MCF 10A (cell line): ENCODE measurements at regions of chr5 and their contacts with region 1.

Region 1: GRCh38 chr5:96868603-96869371 is 7.5 kb upstream of the ERAP2 start:
- DNase-seq: peak; percentile 69
- H3K4me3 Mint-ChIP-seq: no peak overlapping the region
- H3K27ac Mint-ChIP-seq: no peak overlapping the region
- H3K4me1 Mint-ChIP-seq: peaks cover 6% of the 10 kb centered on the region
- H3K27me3 Mint-ChIP-seq: no peaks in the 10 kb centered on the region
- CTCF ChIP-seq: peak; percentile 95

Region 2: DNA sequence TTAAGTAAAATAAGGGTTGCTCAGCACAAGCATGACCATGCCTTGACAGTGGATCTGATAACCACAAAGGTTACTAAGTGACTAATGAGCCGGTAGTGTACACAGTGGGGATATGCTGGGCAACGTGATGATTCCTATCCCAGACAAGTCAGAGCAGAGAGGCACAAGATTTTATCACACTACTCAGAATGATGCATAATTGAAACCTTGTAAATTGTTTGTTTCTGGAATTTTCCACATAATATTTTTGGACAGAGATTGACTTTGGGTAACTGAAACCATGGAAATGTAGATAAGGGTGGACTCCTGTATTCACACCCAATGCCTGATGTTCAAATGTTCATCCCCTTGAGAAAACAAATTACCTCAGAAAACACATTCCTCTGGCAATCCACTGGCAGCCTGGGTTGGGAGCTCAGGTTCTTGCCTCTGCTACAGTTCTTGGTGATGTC is 44.9 kb before region 1 on chr5:
- CTCF ChIA-PET with region 1: interaction called, 12 read pairs
- POLR2A ChIA-PET with region 1: no interaction called
- intact Hi-C with region 1: no loop called
- DNase-seq: peak; percentile 64
- H3K4me3 Mint-ChIP-seq: no peak overlapping the region
- H3K27ac Mint-ChIP-seq: no peak overlapping the region
- H3K4me1 Mint-ChIP-seq: peaks cover 5% of the 10 kb centered on the region
- H3K27me3 Mint-ChIP-seq: no peaks in the 10 kb centered on the region
- CTCF ChIP-seq: no peak

Region 3: GRCh38 chr5:96934708-96935558 is 66.1 kb after region 1 on chr5:
- CTCF ChIA-PET with region 1: interaction called, 10 read pairs
- POLR2A ChIA-PET with region 1: interaction called, 7 read pairs
- intact Hi-C with region 1: loop called (anchors 2 kb)
- DNase-seq: peak; percentile 96
- H3K4me3 Mint-ChIP-seq: peak overlapping the region; percentile 96
- H3K27ac Mint-ChIP-seq: peak overlapping the region; percentile 82
- H3K4me1 Mint-ChIP-seq: peaks cover 23% of the 10 kb centered on the region
- H3K27me3 Mint-ChIP-seq: no peaks in the 10 kb centered on the region
- CTCF ChIP-seq: no peak

Region 4: GRCh38 chr5:96990102-96990501 is 121.3 kb after region 1 on chr5:
- CTCF ChIA-PET with region 1: interaction called, 25 read pairs
- POLR2A ChIA-PET with region 1: no interaction called
- intact Hi-C with region 1: no loop called
- DNase-seq: no peak
- H3K4me3 Mint-ChIP-seq: no peak overlapping the region
- H3K27ac Mint-ChIP-seq: no peak overlapping the region
- H3K4me1 Mint-ChIP-seq: no peaks in the 10 kb centered on the region
- H3K27me3 Mint-ChIP-seq: no peaks in the 10 kb centered on the region
- CTCF ChIP-seq: no peak

Region 5: GRCh38 chr5:97142521-97143254 is 273.9 kb after region 1 on chr5 and contains the start of gene LIX1:
- CTCF ChIA-PET with region 1: interaction called, 30 read pairs
- POLR2A ChIA-PET with region 1: interaction called, 4 read pairs
- intact Hi-C with region 1: loop called (anchors 1 kb)
- DNase-seq: peak; percentile 55
- H3K4me3 Mint-ChIP-seq: no peak within 1 kb of the TSS
- H3K27ac Mint-ChIP-seq: no peak within 1 kb of the TSS
- H3K4me1 Mint-ChIP-seq: no peaks in the 10 kb centered on the region
- H3K27me3 Mint-ChIP-seq: peaks cover 37% of the 10 kb centered on the region
- CTCF ChIP-seq: peak; percentile 52
- total RNA-seq, gene LIX1: not detected in 2 replicates

Region 6: DNA sequence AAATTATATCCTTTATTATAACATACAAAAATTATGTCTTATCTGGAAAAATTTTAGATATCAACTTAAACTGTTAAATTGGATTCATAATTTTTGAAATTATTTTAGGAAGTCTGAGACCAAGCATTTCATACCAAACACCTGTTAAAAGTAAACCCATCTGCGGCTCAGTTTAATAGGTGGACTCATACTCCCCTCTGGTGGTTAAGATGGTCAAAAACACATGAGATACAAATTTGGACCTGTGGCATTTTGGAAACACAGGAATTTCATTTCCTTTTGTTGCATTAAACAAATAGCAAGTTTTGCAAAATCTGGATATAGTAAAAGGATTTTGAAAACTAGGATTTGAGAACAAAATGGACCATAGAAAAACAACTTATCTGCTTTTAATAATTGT is 1958.4 kb after region 1 on chr5:
- CTCF ChIA-PET with region 1: interaction called, 3 read pairs
- POLR2A ChIA-PET with region 1: no interaction called
- intact Hi-C with region 1: loop called (anchors 1 kb)
- DNase-seq: peak; percentile 60
- H3K4me3 Mint-ChIP-seq: no peak overlapping the region
- H3K27ac Mint-ChIP-seq: no peak overlapping the region
- H3K4me1 Mint-ChIP-seq: no peaks in the 10 kb centered on the region
- H3K27me3 Mint-ChIP-seq: no peaks in the 10 kb centered on the region
- CTCF ChIP-seq: peak; percentile 57